ENCODE measurements at regions of chr3 and their contacts with region 1.

Region 1: GRCh38 chr3:176584413-176585176 is 612.7 kb downstream of the TBL1XR1 start:
- DNase-seq: no peak

Region 2: GRCh38 chr3:176193032-176193730 is 391.4 kb before region 1 on chr3:
- intact Hi-C with region 1: no loop called
- DNase-seq: no peak

Region 3: DNA sequence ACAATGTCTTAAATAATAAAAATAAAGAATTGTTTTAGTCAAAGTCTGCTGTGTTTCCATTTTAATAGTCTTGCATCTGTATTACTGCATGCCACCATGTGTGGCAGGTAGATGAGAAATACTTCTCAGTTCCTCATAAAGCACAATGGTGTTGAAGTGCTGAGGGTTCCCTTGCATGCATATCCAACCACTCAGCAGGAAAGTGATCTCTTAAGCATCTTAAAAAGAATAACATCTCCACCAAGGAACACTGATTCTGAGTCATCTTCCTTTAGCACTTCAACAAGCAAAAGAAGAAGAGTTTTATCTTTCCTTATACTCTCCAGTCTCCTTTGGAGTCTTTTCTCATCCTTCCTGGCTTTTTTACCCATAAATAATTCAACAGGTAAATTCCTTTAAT is 10.7 kb after region 1 on chr3:
- intact Hi-C with region 1: loop called in 1 of 2 experiments (anchors 1 kb)
- DNase-seq: no peak

Measured in posterior vena cava (tissue), 2 donors.